Activated CD8-positive, alpha-beta T cell treated with anti-CD3 and anti-CD28 coated beads for 36 hours (primary cell): ENCODE measurements at regions of chr18 and their contacts with region 1.

Region 1: DNA sequence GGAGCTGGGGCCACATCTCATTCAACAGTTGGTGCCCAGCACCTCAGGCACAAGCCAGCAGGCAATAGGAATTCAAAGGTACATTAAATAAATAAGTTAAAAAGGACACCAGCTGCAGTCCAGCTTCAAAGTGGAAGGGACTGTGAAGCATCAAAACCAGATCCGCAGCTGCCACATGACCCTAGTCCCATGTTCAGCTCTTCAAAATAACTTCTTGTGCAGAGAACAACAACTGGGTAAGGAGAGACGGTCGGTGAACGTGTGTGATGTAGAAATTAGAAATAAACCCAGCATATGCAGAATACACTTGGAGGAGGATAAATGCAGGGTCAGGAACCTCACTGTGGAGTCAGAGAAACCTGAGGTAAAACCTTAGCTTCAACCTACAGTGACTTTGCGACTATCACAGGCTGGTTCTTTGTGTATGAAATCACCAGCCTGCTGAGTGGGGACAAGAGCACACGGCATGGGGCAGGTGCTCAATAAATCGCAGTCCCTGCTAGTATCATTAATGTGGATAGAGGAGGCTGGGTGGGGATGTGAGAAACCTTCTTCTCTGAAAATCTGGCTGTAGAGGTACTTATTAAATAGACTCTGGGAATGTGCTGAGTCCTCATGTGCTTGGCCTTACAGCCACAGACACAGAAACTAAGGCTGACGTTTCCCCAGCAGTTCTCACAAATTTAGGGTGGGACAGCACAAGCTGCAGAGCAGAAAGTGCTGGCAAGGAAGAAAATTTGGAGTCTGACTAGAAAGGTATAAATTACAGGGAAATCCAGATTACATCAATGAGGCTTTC is 20.8 kb downstream of the FBXO15 start:
- DNase-seq: no peak
- ATAC-seq: no peak
- H3K4me3 Mint-ChIP-seq: no peak overlapping the region
- H3K27ac Mint-ChIP-seq: no peak overlapping the region
- H3K4me1 Mint-ChIP-seq: peaks cover 4% of the 10 kb centered on the region
- H3K27me3 Mint-ChIP-seq: no peaks in the 10 kb centered on the region
- CTCF ChIP-seq: no peak

Region 2: DNA sequence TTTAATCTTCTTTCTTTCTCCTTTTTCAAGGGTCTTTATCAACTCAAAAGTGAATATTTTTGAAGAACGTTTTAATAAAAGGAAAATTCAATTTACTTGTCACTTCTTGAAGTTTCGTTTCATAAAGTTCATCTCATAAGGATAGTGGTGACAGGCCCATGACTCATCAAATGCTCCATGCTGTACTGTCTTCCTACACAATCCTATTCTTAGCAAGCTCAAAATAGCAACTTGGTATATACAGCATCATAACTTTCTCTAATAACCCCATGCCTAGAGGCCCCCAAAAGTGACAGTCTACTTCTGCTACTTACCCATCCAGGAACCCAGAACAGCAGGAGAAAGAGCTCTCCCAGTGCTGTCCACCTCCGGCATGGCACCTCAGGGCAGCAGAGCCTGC is 13.0 kb after region 1 on chr18:
- CTCF ChIA-PET with region 1: interaction called, 13 read pairs
- POLR2A ChIA-PET with region 1: interaction called, 5 read pairs
- intact Hi-C with region 1: no loop called
- DNase-seq: peak; percentile 76
- ATAC-seq: peak; percentile 93
- H3K4me3 Mint-ChIP-seq: peak overlapping the region; percentile 62
- H3K27ac Mint-ChIP-seq: peak overlapping the region; percentile 94
- H3K4me1 Mint-ChIP-seq: peaks cover 41% of the 10 kb centered on the region
- H3K27me3 Mint-ChIP-seq: no peaks in the 10 kb centered on the region
- CTCF ChIP-seq: no peak

Region 3: GRCh38 chr18:74412116-74412880 is 285.4 kb after region 1 on chr18:
- CTCF ChIA-PET with region 1: no interaction called
- POLR2A ChIA-PET with region 1: no interaction called
- intact Hi-C with region 1: no loop called
- DNase-seq: no peak
- ATAC-seq: no peak
- H3K4me3 Mint-ChIP-seq: no peak overlapping the region
- H3K27ac Mint-ChIP-seq: no peak overlapping the region
- H3K4me1 Mint-ChIP-seq: peaks cover 21% of the 10 kb centered on the region
- H3K27me3 Mint-ChIP-seq: no peaks in the 10 kb centered on the region
- CTCF ChIP-seq: no peak

Region 4: DNA sequence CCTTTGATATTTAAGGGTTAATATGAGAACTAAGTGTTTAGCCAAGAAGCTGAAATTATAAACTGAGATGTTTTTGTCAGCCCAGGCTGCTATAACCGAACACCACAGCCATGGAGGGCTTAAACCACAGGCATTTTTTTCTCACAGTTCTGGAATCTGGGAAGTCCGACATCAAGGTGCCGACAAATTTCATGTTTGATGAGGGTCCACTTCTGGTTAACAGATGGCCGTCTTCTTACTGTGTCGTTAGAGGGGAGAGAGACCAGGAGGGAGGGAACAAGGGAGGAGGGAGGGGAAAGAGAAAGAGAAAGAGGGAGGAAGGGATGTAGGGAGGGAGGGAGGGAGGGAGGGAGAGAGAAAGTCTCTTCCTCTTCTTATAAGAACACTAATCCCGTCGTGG is 362.8 kb after region 1 on chr18:
- CTCF ChIA-PET with region 1: no interaction called
- POLR2A ChIA-PET with region 1: no interaction called
- intact Hi-C with region 1: no loop called
- DNase-seq: no peak
- ATAC-seq: no peak
- H3K4me3 Mint-ChIP-seq: no peak overlapping the region
- H3K27ac Mint-ChIP-seq: no peak overlapping the region
- H3K4me1 Mint-ChIP-seq: peaks cover 16% of the 10 kb centered on the region
- H3K27me3 Mint-ChIP-seq: no peaks in the 10 kb centered on the region
- CTCF ChIP-seq: no peak